Activated CD4-positive, alpha-beta T cell treated with anti-CD3 and anti-CD28 coated beads for 36 hours (primary cell): ENCODE measurements at regions of chr6 and their contacts with region 1.

Region 1: DNA sequence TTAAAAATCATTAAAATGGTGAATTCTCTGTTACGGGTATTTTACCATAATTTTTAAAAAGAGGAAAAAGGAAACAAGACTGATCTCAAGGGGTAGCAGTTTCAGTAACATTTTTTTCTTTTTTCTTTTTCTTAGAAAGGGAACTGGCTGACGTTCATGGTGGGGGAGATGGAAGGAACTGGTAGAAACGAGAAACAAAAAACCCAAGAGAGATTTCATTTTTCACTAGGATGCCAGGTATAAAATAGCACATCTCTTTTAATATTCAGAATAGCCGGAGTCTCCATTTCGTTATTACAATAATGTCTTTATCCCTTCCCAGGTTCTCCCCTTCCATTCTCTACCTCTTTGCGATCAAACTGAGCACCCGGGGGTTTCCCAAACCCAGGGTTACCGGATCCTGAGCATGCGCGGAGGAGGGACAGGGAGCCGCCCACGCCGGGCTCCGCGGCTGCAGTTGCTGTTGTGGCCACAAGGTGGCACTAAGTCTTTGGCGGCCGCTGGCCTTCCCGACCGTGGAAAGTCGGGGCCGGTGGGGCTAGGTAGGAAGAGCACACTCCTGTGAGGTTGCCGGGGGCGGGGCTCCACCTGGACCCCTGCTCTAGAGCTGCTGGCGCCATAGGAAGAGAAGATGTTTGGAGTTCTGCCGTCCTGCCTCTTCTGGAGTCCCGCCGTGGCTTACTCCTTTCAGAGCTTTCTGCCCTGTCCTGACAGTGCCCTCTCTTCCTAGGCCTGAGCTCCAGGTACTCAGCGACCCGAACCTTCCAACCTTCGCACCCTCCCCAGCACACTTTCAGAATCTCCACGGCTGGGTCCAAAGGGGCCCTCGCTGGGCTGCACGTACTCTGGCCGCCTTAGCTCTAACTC is 146.8 kb downstream of the SH3BGRL2 start:
- DNase-seq: peak; percentile 93
- ATAC-seq: peak; percentile 88
- H3K4me3 Mint-ChIP-seq: peak overlapping the region; percentile 63
- H3K27ac Mint-ChIP-seq: peak overlapping the region; percentile 62
- H3K4me1 Mint-ChIP-seq: peaks cover 7% of the 10 kb centered on the region
- H3K27me3 Mint-ChIP-seq: peaks cover 4% of the 10 kb centered on the region

Region 2: DNA sequence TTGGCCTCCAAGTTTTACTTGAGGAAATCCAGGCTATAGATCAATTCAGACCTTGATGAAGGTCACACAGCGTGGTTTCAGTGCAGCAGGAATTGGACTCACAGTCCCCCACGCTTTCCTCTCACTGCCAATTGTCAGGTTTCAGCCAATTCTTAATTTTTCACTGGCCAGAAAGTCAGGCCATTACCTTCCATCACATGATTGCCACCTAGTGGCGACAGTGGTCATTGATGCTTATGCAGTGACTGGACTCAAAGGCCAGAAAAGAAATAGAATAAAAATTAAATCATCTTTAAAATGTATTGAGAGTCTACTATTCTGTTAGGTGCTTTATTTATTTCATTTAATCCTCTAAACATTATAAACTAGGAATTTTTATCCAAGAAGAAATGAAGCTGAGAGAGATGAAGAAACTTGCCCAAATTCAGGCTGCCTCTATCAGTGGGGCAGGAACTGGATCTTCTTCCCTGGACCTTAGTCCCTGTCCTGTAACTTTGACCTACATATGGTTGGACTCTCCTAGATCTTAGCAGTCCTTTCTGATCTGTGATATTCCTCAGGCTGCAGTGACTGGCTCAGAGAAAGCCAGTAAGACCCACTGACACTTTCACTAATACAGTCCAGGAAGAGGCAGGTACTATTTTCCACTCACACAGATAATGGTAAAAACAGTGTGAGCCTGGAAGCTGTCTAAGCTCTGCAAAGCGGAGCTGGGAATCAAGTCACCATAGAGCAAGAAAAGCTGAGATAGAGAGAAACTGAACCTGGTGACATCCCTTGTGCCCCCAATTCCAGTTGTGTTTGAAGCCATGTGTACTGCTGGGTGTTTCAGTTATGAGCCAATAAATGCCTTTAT is 36.1 kb after region 1 on chr6:
- CTCF ChIA-PET with region 1: interaction called, 8 read pairs
- POLR2A ChIA-PET with region 1: no interaction called
- intact Hi-C with region 1: loop called (anchors 1 kb)
- DNase-seq: peak; percentile 81
- ATAC-seq: peak; percentile 71
- H3K4me3 Mint-ChIP-seq: no peak overlapping the region
- H3K27ac Mint-ChIP-seq: no peak overlapping the region
- H3K4me1 Mint-ChIP-seq: no peaks in the 10 kb centered on the region
- H3K27me3 Mint-ChIP-seq: peaks cover 2% of the 10 kb centered on the region

Region 3: DNA sequence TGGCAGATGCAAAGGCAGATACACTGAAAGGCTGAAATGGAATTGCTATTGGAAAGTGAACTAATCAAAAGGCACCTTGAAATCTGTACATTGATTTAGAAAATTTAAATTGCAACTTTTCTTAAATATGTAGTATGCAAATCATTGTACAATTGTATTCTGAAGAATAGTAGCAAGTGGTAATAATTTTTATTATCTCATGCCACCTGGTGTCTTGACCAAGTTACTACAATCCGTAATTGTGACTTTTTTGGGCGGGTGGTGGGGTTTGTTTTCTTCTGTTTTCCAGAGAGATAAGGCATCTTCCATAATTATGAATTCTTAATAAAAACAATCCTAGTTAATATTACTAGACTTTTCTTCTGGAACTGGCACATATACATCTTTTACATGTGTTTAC is 316.1 kb after region 1 on chr6:
- CTCF ChIA-PET with region 1: interaction called, 3 read pairs
- POLR2A ChIA-PET with region 1: no interaction called
- intact Hi-C with region 1: loop called (anchors 1 to 5 kb)
- DNase-seq: peak; percentile 23
- ATAC-seq: no peak
- H3K4me3 Mint-ChIP-seq: no peak overlapping the region
- H3K27ac Mint-ChIP-seq: no peak overlapping the region
- H3K4me1 Mint-ChIP-seq: peaks cover 2% of the 10 kb centered on the region
- H3K27me3 Mint-ChIP-seq: peaks cover 2% of the 10 kb centered on the region